Kidney (tissue), 22 donors: ENCODE measurements at regions of chr1 and their contacts with region 1.

Region 1: GRCh38 chr1:13667691-13668090 is 32.3 kb upstream of the PRDM2 start:
- DNase-seq: no peak
- H3K4me3 ChIP-seq: no peak overlapping the region
- H3K27ac ChIP-seq: no peak overlapping the region
- H3K4me1 ChIP-seq: peaks cover 0 to 2% (median 0%) of the 10 kb centered on the region in 3 donors
- H3K27me3 ChIP-seq: no peaks in the 10 kb centered on the region
- CTCF ChIP-seq: no peak

Region 2: DNA sequence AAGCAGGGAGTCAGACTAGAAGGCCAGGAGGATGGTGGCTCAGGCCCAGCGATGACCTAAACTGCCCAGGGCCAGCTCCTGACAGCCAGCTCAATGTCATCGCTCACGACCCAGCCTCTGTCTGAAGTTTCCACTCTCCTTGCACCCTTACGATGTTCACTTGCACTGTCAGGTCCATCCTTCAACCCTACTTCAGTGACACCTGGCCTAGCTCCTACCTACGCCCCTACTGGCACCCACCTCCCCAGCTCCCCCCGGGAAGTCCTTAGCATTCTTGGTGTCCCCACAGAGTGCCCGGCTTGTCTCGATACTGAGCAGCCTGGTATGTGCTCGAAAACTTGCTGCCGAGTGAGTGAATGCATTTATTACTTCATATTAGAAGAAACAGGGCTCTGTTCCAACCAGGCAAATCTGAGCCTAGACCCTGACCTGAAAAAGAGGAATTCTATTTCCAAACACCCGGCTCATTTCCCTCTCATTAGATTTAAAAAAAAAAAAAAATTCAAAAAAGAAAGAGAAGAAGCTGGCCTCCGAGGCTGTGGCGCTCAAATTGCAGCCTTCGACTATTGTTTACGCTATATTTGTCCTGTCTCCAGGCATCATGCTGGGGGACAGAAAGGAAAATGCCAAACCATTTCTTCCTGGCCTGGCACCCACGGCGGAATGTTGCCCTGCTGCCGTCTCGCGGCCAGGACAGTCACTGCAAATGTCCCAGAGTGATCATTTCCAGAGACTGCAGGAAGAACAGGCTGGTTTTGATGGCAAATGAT is 124.1 kb before region 1 on chr1:
- intact Hi-C with region 1: no loop called
- DNase-seq: peak in 4 of 5 donors; percentile 66 to 85 (median 81)
- H3K4me3 ChIP-seq: no peak overlapping the region
- H3K27ac ChIP-seq: no peak overlapping the region
- H3K4me1 ChIP-seq: no peaks in the 10 kb centered on the region
- H3K27me3 ChIP-seq: no peaks in the 10 kb centered on the region
- CTCF ChIP-seq: peak; percentile 54

Region 3: GRCh38 chr1:13960375-13960987 is 292.8 kb after region 1 on chr1:
- intact Hi-C with region 1: loop called (anchors 5 kb)
- DNase-seq: peak in 4 of 5 donors; percentile 68 to 82 (median 74)
- H3K4me3 ChIP-seq: no peak overlapping the region
- H3K27ac ChIP-seq: no peak overlapping the region
- H3K4me1 ChIP-seq: no peaks in the 10 kb centered on the region
- H3K27me3 ChIP-seq: no peaks in the 10 kb centered on the region
- CTCF ChIP-seq: peak; percentile 99

Region 4: GRCh38 chr1:14049965-14050364 is 382.3 kb after region 1 on chr1:
- intact Hi-C with region 1: no loop called
- DNase-seq: no peak
- H3K4me3 ChIP-seq: no peak overlapping the region
- H3K27ac ChIP-seq: no peak overlapping the region
- H3K4me1 ChIP-seq: no peaks in the 10 kb centered on the region
- H3K27me3 ChIP-seq: no peaks in the 10 kb centered on the region
- CTCF ChIP-seq: no peak

Region 5: GRCh38 chr1:14090062-14090461 is 422.4 kb after region 1 on chr1:
- intact Hi-C with region 1: no loop called
- DNase-seq: no peak
- H3K4me3 ChIP-seq: no peak overlapping the region
- H3K27ac ChIP-seq: no peak overlapping the region
- H3K4me1 ChIP-seq: no peaks in the 10 kb centered on the region
- H3K27me3 ChIP-seq: no peaks in the 10 kb centered on the region
- CTCF ChIP-seq: no peak